ENCODE measurements at regions of chr2 and their contacts with region 1.

Region 1: GRCh38 chr2:195289081-195289480 is 367.9 kb upstream of the SLC39A10 start:
- DNase-seq: no peak
- ATAC-seq: no peak

Region 2: DNA sequence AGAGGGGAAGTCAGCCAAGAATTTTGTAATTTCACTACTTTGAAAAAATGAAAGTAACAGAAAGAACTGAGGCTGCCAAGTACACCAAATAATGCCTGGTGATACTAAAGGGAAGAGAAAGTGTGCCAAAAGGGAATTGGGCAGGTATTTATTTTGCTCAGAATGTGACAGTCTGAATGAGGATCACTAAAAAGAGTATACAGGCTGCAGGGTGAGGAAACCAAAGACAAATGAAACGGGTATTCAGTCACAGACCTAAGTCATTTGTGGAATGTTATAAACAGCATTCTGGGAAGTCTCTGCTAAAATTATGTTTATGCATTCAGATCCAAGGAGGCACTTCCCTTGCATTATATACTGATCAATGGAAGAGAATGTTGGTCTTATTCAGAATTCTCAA is 50.7 kb before region 1 on chr2:
- intact Hi-C with region 1: loop called (anchors 2 kb)
- DNase-seq: no peak
- ATAC-seq: no peak